ENCODE measurements at regions of chr10 and their contacts with region 1.

Region 1: DNA sequence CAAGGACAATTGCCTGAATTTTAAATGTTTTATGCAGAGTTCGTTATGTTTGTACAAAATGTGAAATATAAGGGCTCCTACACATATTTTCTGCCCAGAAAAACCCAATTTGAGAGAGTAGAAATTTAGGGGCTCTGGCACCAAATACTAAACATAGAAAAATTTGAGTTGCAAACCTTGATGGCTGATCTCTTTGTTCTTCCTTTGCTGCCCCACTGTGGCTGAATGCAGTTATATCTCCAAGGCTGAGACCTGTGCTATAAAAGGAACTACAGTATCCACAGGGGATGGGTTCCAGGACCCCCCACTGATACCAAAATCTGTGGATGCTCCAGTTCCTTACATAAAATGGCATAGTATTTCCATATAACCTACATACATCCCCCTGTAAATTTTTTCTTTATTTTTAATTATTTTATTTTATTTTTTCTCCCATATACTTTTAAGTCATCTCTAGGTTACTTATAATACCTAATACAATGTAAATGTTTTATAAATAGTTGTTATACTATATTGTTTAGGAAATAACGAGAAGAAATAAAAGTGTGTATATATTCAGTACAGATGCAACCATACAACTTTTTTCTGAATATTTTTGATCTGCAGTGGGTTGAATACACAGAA is 22.5 kb downstream of the CFAP43 start:
- DNase-seq: no peak
- ATAC-seq: peak in 1 of 2 donors; percentile 27
- H3K4me3 ChIP-seq: no peak overlapping the region
- H3K27ac ChIP-seq: no peak overlapping the region
- H3K4me1 ChIP-seq: peaks cover 5 to 14% of the 10 kb centered on the region in 2 donors
- H3K27me3 ChIP-seq: no peaks in the 10 kb centered on the region
- CTCF ChIP-seq: peak in 4 of 5 experiments; percentile 30 to 48 (median 43)
- POLR2A ChIP-seq: no peak

Region 2: DNA sequence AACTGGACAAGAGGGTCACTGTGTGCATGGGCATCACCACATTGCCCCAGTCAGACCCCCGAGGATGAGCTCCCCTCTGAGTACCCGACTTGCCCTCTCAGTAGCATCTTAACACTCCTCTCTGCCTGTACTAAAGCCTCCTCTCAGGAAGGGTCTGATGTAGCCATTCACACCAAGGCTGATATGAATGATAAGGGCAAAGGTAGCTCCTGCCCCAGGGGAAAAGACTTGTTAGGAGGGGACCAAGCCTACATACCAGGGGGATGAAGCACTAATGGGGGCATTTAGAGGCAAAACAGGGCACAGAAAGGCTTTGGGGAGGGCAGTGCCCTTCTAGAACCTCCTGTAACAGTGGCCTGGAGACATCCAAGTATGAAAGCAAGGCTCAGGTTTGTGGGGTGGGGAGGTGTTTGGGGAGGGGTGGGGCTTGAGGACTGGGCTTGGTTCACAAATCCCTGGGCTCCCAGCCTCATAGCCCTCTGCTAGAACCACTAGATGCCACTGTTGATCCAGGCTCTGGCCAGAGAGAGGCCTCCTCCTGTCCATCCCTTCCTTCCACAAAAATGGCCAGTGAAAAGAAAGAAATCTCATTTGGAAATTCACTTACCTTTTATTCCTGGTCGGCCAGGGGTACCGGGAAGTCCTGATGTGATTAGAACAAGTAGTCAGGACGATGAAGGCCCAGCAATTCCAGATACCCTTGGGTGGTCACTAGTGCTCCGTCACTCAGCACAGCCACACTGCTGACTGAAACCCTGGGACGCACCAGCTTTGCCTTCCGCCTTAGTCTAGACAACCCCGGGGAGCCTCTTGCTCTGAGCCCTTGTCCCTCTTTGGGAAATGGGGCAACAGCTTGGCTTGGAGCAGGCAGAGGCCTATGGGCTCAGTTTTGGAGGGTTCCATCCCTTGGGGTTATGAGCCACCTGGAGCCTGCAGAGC is 164.3 kb before region 1 on chr10:
- in situ Hi-C with region 1: loop called in 2 of 4 experiments (anchors 25 kb)
- intact Hi-C with region 1: loop called (anchors 2 kb)
- DNase-seq: no peak
- ATAC-seq: peak in 1 of 2 donors; percentile 52
- H3K4me3 ChIP-seq: no peak overlapping the region
- H3K27ac ChIP-seq: no peak overlapping the region
- H3K4me1 ChIP-seq: no peaks in the 10 kb centered on the region
- H3K27me3 ChIP-seq: no peaks in the 10 kb centered on the region
- CTCF ChIP-seq: peak in 3 of 5 experiments; percentile 37 to 49 (median 42)
- POLR2A ChIP-seq: no peak

Region 3: DNA sequence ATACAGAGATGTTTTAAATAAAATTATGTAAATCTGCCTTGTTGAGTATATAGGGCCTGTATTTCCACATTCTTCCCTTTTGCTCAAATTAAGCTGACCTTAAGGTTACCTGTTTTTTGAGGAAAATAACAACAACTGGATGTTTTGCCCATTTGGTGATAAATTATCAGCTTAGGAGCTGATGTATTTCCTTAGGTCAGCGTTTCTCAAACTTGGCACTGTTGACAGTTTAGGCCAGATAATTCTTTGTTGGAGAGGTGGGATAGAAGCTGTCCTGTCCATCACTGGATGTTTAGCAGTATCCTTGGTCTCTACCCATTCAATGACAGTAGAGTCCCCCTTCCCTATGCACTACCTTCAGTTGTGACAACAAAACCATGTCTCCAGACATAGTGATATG is 66.5 kb after region 1 on chr10:
- in situ Hi-C with region 1: no loop called
- intact Hi-C with region 1: loop called (anchors 1 kb)
- DNase-seq: no peak
- ATAC-seq: no peak
- H3K4me3 ChIP-seq: no peak overlapping the region
- H3K27ac ChIP-seq: no peak overlapping the region
- H3K4me1 ChIP-seq: no peaks in the 10 kb centered on the region
- H3K27me3 ChIP-seq: peaks cover 0 to 11% (median 7%) of the 10 kb centered on the region in 3 donors
- CTCF ChIP-seq: no peak
- POLR2A ChIP-seq: no peak

Region 4: GRCh38 chr10:104337974-104338735 is 128.5 kb after region 1 on chr10 and contains the start of gene ITPRIP:
- in situ Hi-C with region 1: no loop called
- intact Hi-C with region 1: no loop called
- DNase-seq: peak; percentile 56 to 71
- ATAC-seq: peak; percentile 71 to 76
- H3K4me3 ChIP-seq: peak within 1 kb of the TSS; percentile 73 to 98 (median 94)
- H3K27ac ChIP-seq: peak within 1 kb of the TSS; percentile 96 to 99 (median 96)
- H3K4me1 ChIP-seq: peaks cover 40 to 41% of the 10 kb centered on the region in 2 donors
- H3K27me3 ChIP-seq: no peaks in the 10 kb centered on the region
- CTCF ChIP-seq: peak in 2 of 5 experiments; percentile 14 to 34
- POLR2A ChIP-seq: peak; percentile 94 to 96
- total RNA-seq, gene ITPRIP: 5.0 to 19.9 (median 7.9) TPM

Region 5: DNA sequence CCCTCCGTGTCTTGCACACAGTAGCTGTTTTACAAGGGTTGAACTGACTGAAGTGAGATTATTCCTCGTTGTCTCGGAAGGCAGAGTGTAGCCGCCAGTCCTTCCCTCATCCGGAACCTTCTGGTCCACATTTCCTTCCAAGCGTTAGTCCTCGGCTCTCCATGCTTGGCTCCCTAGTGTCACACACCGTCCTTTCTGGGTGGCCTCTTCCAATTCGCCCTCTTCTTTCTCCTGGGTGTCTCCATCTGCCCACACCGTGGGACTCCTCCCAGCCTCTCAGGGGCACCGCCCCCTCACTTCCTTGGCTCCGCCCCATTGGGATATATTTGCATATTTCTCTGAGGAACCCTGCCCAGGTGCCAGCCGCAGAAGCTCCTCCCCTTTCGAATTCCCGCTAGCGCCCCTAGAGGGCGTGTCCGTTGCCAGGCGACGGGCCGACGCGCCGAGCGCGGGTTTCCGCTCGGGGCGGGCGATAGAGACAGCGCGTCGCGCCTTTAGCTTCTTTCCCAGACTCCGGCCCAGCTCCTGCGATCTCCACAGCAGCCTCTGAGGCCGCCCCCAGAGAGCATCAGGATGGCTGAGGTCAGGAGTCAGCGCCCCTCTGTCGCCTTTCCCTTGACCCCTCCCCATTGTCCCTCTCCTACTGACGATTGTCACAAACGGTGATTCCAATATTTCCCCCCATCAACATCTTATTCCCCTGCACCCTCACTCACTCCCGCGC is 143.8 kb after region 1 on chr10 and contains the start of gene CFAP58:
- in situ Hi-C with region 1: no loop called
- intact Hi-C with region 1: no loop called
- DNase-seq: peak; percentile 85 to 92
- ATAC-seq: peak; percentile 92
- H3K4me3 ChIP-seq: peak within 1 kb of the TSS; percentile 38 to 60 (median 54)
- H3K27ac ChIP-seq: peak within 1 kb of the TSS in 1 of 4 donors; percentile 20
- H3K4me1 ChIP-seq: peaks cover 11 to 22% of the 10 kb centered on the region in 2 donors
- H3K27me3 ChIP-seq: no peaks in the 10 kb centered on the region
- CTCF ChIP-seq: peak; percentile 71 to 88 (median 81)
- POLR2A ChIP-seq: no peak
- total RNA-seq, gene CFAP58: 0.13 to 0.36 (median 0.27) TPM in 3 of 4 donors, not detected in the other

Measured in gastrocnemius medialis (tissue), 4 donors.